Naive thymus-derived CD4-positive, alpha-beta T cell (primary cell): ENCODE measurements at regions of chr22 and their contacts with region 1.

Region 1: DNA sequence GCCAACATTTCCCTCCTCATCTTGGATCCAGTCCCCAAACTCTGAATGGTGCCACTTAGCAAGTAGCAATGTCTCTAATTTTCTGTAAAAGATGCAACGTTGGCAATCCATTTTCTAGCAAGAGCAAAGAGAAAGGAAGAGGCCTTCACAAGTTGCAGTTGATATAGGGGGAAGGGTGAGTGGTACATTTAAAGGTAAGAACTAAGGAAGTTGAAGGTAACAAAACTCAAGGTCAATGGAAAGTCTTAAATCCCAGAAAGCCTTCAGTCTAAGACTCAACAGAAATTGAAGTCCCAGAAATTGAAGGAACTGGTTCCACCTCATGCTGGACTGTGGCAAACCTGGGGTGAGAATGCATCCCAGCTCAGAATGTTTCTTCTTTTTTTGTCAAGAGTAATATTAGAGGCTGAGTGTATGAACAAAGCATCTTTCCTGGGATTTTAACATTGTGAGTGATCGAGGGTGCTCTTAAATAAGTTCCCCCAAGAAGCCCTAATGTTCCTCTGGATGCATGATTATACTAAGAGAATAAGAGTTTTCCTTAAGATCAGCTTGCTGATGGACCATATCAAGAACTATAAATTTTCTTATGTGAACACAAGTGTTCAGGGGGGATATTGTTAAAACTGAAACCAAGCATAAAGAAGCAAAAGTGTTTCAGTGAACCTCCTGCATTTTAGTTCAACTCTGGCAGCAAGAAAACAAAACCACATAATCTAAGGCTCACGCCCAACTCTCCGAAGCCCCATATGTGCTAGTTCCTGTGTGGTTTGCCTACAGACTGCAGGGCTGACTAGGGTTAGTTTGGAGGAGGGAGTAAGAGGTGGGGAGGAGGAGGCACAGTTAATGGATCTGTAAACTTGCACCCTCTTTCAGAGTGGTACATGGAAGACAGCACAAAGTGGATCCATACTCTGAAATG is at the start of gene GRAP2:
- DNase-seq: peak in 8 of 9 donors; percentile 52 to 90 (median 86)
- ATAC-seq: peak; percentile 98
- H3K4me3 ChIP-seq: peak within 1 kb of the TSS; percentile 71
- H3K4me3 Mint-ChIP-seq: peak within 1 kb of the TSS in 9 of 10 donors; percentile 95 to 99 (median 97)
- H3K27ac ChIP-seq: peak within 1 kb of the TSS; percentile 83
- H3K27ac Mint-ChIP-seq: peak within 1 kb of the TSS in 6 of 9 donors; percentile 86 to 99 (median 96)
- H3K4me1 ChIP-seq: peaks cover 23 to 27% of the 10 kb centered on the region in 2 donors
- H3K4me1 Mint-ChIP-seq: peaks cover 13 to 31% (median 22%) of the 10 kb centered on the region in 7 donors
- H3K27me3 ChIP-seq: no peaks in the 10 kb centered on the region
- H3K27me3 Mint-ChIP-seq: no peaks in the 10 kb centered on the region
- total RNA-seq, gene GRAP2: 108 to 156 (median 145) TPM

Region 2: DNA sequence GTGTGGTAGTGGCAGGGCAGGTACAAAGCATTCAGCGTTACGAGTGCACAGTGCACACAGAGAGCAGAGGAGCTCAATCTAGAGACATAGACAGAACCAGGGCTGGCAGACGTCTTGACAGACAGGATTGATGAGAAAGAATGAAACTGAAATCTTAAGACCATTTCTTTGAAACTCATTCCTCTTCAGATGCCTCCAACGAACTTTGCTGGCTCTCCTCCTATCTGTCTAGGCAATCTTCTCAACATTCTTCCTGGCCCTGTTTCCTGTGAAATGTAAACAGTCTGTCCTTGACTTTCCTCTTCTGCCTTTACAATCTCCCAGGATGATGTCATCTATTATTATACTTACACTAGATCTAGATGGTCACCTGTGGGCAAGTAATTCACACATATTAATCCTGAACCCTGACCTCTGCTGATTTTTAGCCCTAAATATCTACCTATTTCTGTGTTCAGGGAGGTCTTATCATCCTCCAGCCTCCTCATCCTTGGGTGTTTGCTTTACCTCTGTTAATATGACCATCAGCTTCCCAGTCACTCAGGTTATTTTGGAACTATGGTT is 126.5 kb before region 1 on chr22:
- CTCF ChIA-PET with region 1: no interaction called
- POLR2A ChIA-PET with region 1: interaction called, 5 read pairs
- intact Hi-C with region 1: loop called in 1 of 2 experiments (anchors 5 kb)
- DNase-seq: peak in 8 of 9 donors; percentile 16 to 51 (median 40)
- ATAC-seq: peak; percentile 88
- H3K4me3 ChIP-seq: no peak overlapping the region
- H3K4me3 Mint-ChIP-seq: peak overlapping the region; percentile 3 to 75 (median 62)
- H3K27ac ChIP-seq: no peak overlapping the region
- H3K27ac Mint-ChIP-seq: peak overlapping the region; percentile 51 to 83 (median 80)
- H3K4me1 ChIP-seq: peaks cover 7 to 24% of the 10 kb centered on the region in 2 donors
- H3K4me1 Mint-ChIP-seq: peaks cover 22 to 60% (median 55%) of the 10 kb centered on the region in 7 donors
- H3K27me3 ChIP-seq: no peaks in the 10 kb centered on the region
- H3K27me3 Mint-ChIP-seq: no peaks in the 10 kb centered on the region

Region 3: GRCh38 chr22:39859903-39860588 is 40.5 kb before region 1 on chr22:
- CTCF ChIA-PET with region 1: no interaction called
- POLR2A ChIA-PET with region 1: interaction called, 3 read pairs
- intact Hi-C with region 1: loop called in 1 of 2 experiments (anchors 5 kb)
- DNase-seq: peak in 4 of 9 donors; percentile 5 to 17 (median 10)
- ATAC-seq: no peak
- H3K4me3 ChIP-seq: no peak overlapping the region
- H3K4me3 Mint-ChIP-seq: peak overlapping the region in 8 of 10 donors; percentile 48 to 76 (median 64)
- H3K27ac ChIP-seq: no peak overlapping the region
- H3K27ac Mint-ChIP-seq: peak overlapping the region in 8 of 9 donors; percentile 4 to 81 (median 70)
- H3K4me1 ChIP-seq: peaks cover 0 to 14% of the 10 kb centered on the region in 2 donors
- H3K4me1 Mint-ChIP-seq: peaks cover 15 to 33% (median 29%) of the 10 kb centered on the region in 7 donors
- H3K27me3 ChIP-seq: no peaks in the 10 kb centered on the region
- H3K27me3 Mint-ChIP-seq: peaks cover 0 to 9% (median 0%) of the 10 kb centered on the region in 5 donors

Region 4: GRCh38 chr22:39927544-39927943 is 27.0 kb after region 1 on chr22:
- CTCF ChIA-PET with region 1: interaction called, 8 read pairs
- POLR2A ChIA-PET with region 1: interaction called, 350 read pairs
- intact Hi-C with region 1: loop called in 1 of 2 experiments (anchors 1 kb)
- DNase-seq: no peak
- ATAC-seq: no peak
- H3K4me3 ChIP-seq: peak overlapping the region; percentile 68
- H3K4me3 Mint-ChIP-seq: no peak overlapping the region
- H3K27ac ChIP-seq: peak overlapping the region; percentile 78
- H3K27ac Mint-ChIP-seq: no peak overlapping the region
- H3K4me1 ChIP-seq: peaks cover 90 to 94% of the 10 kb centered on the region in 2 donors
- H3K4me1 Mint-ChIP-seq: peaks cover 34 to 48% (median 41%) of the 10 kb centered on the region in 7 donors
- H3K27me3 ChIP-seq: no peaks in the 10 kb centered on the region
- H3K27me3 Mint-ChIP-seq: no peaks in the 10 kb centered on the region

Region 5: GRCh38 chr22:39985383-39986035 is 84.9 kb after region 1 on chr22:
- CTCF ChIA-PET with region 1: no interaction called
- POLR2A ChIA-PET with region 1: no interaction called
- intact Hi-C with region 1: no loop called
- DNase-seq: peak in 3 of 9 donors; percentile 19 to 41 (median 38)
- ATAC-seq: peak; percentile 63
- H3K4me3 ChIP-seq: no peak overlapping the region
- H3K4me3 Mint-ChIP-seq: peak overlapping the region in 6 of 10 donors; percentile 22 to 52 (median 32)
- H3K27ac ChIP-seq: no peak overlapping the region
- H3K27ac Mint-ChIP-seq: peak overlapping the region in 8 of 9 donors; percentile 32 to 92 (median 43)
- H3K4me1 ChIP-seq: peaks cover 0 to 16% of the 10 kb centered on the region in 2 donors
- H3K4me1 Mint-ChIP-seq: peaks cover 10 to 44% (median 21%) of the 10 kb centered on the region in 7 donors
- H3K27me3 ChIP-seq: no peaks in the 10 kb centered on the region
- H3K27me3 Mint-ChIP-seq: peaks cover 0 to 11% (median 0%) of the 10 kb centered on the region in 5 donors